ENCODE measurements at regions of chr11 and their contacts with region 1.

Region 1: DNA sequence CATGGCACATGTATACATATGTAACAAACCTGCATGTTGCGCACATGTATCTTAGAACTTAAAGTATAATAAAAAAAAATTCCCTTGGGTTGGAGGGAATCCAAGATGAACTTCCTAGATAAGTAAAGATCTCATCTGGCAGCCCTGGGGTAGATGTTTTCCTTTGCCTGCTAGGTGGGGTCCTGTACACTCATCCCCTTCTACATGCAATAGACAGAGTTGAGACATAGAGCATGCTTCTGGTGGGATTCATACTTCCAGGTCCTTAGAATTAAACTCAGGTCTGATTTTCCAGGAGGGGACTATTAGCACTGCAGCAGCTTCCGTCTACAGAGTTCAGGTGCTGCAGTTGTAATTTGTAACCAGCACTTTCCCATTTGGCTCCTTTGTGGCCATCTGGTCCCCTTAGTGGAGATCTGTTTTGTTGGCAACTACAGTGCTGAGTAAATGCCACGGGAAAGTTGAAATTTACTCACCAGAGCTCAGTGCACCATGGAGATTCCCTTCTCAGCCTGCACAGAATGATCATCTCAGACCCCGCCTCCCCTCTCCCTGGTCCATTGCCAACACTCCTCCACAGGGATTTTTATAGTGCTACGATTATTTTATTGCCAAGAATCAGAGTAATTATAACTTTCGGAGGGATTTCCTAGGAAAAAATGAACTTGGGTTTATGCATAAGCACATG is 220.1 kb upstream of the E2F8 start:
- DNase-seq: no peak
- ATAC-seq: no peak
- H3K4me3 ChIP-seq: no peak overlapping the region
- H3K27ac ChIP-seq: no peak overlapping the region
- H3K4me1 ChIP-seq: no peaks in the 10 kb centered on the region
- H3K27me3 ChIP-seq: no peaks in the 10 kb centered on the region

Region 2: DNA sequence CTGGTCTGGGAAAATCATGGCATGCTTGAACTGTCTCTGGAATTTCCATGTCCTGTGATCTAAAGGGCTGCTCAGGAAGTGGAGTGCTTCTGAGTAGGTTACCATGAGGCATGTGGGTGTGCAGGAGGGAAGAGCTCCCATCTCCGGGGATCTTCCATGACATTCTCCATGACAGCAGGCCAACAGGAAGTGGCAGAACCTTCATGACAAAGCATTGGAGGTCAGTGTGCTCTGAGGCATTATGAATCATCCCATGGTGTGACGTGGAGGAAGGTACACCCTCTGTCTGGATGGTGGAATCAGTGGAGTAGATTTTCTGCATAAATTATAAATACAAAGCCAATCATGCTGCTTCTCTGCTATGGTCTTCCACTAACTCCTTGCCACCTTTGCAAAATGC is 80.5 kb before region 1 on chr11:
- intact Hi-C with region 1: no loop called
- DNase-seq: no peak
- ATAC-seq: no peak
- H3K4me3 ChIP-seq: no peak overlapping the region
- H3K27ac ChIP-seq: no peak overlapping the region
- H3K4me1 ChIP-seq: no peaks in the 10 kb centered on the region
- H3K27me3 ChIP-seq: no peaks in the 10 kb centered on the region

Region 3: GRCh38 chr11:19428206-19429002 is 32.5 kb before region 1 on chr11:
- intact Hi-C with region 1: no loop called
- DNase-seq: no peak
- ATAC-seq: no peak
- H3K4me3 ChIP-seq: no peak overlapping the region
- H3K27ac ChIP-seq: no peak overlapping the region
- H3K4me1 ChIP-seq: no peaks in the 10 kb centered on the region
- H3K27me3 ChIP-seq: no peaks in the 10 kb centered on the region

Region 4: GRCh38 chr11:19493446-19494213 is 32.8 kb after region 1 on chr11:
- intact Hi-C with region 1: loop called in 1 of 2 experiments (anchors 2 kb)
- DNase-seq: no peak
- ATAC-seq: no peak
- H3K4me3 ChIP-seq: no peak overlapping the region
- H3K27ac ChIP-seq: no peak overlapping the region
- H3K4me1 ChIP-seq: peaks cover 0 to 1% of the 10 kb centered on the region in 2 donors
- H3K27me3 ChIP-seq: no peaks in the 10 kb centered on the region

Region 5: DNA sequence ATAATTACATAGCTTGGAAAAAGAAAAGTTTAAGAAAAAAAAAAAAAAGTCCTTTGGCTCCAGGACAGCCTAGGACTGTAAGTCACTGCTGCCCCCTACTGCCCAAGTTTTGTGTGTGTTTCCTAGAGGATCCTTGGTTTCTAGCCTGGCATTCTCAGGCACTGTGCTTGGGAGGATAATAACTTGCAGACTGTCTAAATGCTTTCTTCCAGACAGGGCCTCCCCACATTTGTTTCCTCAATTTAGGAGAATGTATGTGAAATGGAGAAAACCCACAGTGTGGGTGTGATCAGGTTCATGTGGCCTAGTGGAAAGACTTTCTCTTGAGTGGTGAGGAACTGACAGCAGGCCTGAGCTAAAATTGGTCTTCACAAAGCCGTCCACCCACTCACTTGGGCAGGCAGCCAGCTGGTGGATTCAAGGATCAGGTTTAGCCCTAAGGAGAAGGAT is 442.8 kb after region 1 on chr11:
- intact Hi-C with region 1: no loop called
- DNase-seq: peak; percentile 82 to 85
- ATAC-seq: peak; percentile 85
- H3K4me3 ChIP-seq: no peak overlapping the region
- H3K27ac ChIP-seq: peak overlapping the region in 1 of 2 donors; percentile 74
- H3K4me1 ChIP-seq: peaks cover 0 to 7% of the 10 kb centered on the region in 2 donors
- H3K27me3 ChIP-seq: no peaks in the 10 kb centered on the region

Measured in aorta (tissue), 5 donors.